Activated CD4-positive, alpha-beta T cell treated with anti-CD3 and anti-CD28 coated beads for 36 hours (primary cell): ENCODE measurements at regions of chr15 and their contacts with region 1.

Region 1: GRCh38 chr15:38389924-38390542 is 63.9 kb upstream of the FAM98B start:
- DNase-seq: peak; percentile 80
- ATAC-seq: peak; percentile 78
- H3K4me3 Mint-ChIP-seq: no peak overlapping the region
- H3K27ac Mint-ChIP-seq: no peak overlapping the region
- H3K4me1 Mint-ChIP-seq: no peaks in the 10 kb centered on the region
- H3K27me3 Mint-ChIP-seq: peaks cover 11% of the 10 kb centered on the region

Region 2: DNA sequence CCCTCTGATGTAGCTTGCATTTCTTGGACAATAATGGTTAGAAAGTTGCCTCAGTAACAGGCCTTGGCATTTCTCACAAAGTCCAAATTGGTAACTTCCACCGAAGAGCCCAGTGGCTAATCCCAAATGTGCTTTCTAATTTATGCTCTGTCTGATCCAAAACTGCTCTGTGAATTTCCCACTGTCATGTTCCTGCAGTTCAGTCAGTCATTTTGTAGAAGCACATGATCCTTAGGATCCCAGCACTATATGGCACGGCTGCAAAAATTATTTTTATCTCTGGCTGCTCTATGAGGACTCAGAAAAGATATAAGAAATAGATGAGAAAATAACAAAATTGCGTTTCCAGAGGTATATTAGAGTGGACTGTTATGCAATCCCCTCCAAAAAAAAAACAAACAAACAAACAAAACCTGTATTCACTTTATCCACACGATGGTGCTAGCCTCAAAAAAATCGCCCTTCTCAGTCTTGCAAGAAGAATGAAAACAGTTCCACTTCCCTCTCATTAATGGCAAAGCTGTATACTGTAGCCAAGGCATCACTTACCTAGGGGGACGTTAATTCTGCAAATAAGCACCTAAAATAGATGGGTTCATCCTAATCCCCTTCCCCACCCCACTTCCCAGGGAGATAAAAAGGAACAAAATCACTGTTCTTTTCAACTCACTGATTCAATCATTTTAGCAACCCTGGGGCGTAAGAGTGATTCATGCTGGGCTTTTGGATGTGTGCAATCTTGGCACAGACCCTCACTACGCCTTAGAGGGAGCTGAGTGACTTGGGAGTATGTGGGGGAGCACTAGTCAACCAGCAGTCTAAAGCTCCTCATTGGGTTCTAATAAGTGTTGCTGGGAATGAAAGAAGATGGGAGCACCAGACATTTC is 394.3 kb before region 1 on chr15:
- CTCF ChIA-PET with region 1: interaction called, 5 read pairs
- POLR2A ChIA-PET with region 1: no interaction called
- intact Hi-C with region 1: loop called (anchors 1 to 2 kb)
- DNase-seq: peak; percentile 28
- ATAC-seq: no peak
- H3K4me3 Mint-ChIP-seq: no peak overlapping the region
- H3K27ac Mint-ChIP-seq: no peak overlapping the region
- H3K4me1 Mint-ChIP-seq: no peaks in the 10 kb centered on the region
- H3K27me3 Mint-ChIP-seq: peaks cover 15% of the 10 kb centered on the region

Region 3: GRCh38 chr15:38002883-38003477 is 387.1 kb before region 1 on chr15:
- CTCF ChIA-PET with region 1: no interaction called
- POLR2A ChIA-PET with region 1: no interaction called
- intact Hi-C with region 1: loop called in 1 of 2 experiments (anchors 2 kb)
- DNase-seq: peak; percentile 52
- ATAC-seq: no peak
- H3K4me3 Mint-ChIP-seq: no peak overlapping the region
- H3K27ac Mint-ChIP-seq: no peak overlapping the region
- H3K4me1 Mint-ChIP-seq: no peaks in the 10 kb centered on the region
- H3K27me3 Mint-ChIP-seq: peaks cover 6% of the 10 kb centered on the region

Region 4: DNA sequence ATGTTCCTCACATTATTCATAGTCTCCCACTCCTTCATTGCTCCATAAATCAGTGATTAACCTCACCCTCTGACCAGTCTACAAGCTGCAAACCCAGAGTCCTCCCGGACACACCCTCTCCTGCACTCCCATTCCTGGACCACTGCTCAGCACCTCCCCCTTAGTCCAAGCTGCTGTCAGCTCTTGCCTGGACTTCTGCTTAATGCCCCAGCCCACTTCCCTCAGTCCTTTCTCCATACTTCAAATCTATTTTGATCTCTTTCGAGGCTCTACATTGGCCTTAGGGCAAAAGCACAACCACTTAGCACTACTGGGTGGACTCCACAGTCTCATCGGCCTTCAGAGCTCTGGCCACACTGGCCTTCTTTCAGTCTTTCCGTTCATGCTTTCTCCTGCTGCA is 15.5 kb before region 1 on chr15:
- CTCF ChIA-PET with region 1: interaction called, 12 read pairs
- POLR2A ChIA-PET with region 1: no interaction called
- intact Hi-C with region 1: no loop called
- DNase-seq: no peak
- ATAC-seq: no peak
- H3K4me3 Mint-ChIP-seq: no peak overlapping the region
- H3K27ac Mint-ChIP-seq: no peak overlapping the region
- H3K4me1 Mint-ChIP-seq: no peaks in the 10 kb centered on the region
- H3K27me3 Mint-ChIP-seq: peaks cover 25% of the 10 kb centered on the region